Activated T-helper 1 cell treated with anti-CD3 and anti-CD28 coated beads, Interleukin-12 subunit alpha, Interleukin-12 subunit beta, Interleukin-2, Interleukin-4 antibody, amounts not matched to agents 30 ng/mL and 10 ng/mL and 1 ng/mL, durations not matched to agents 14 hours and 24 hours and 36 hours (primary cell): ENCODE measurements at regions of chr16 and their contacts with region 1.

Region 1: DNA sequence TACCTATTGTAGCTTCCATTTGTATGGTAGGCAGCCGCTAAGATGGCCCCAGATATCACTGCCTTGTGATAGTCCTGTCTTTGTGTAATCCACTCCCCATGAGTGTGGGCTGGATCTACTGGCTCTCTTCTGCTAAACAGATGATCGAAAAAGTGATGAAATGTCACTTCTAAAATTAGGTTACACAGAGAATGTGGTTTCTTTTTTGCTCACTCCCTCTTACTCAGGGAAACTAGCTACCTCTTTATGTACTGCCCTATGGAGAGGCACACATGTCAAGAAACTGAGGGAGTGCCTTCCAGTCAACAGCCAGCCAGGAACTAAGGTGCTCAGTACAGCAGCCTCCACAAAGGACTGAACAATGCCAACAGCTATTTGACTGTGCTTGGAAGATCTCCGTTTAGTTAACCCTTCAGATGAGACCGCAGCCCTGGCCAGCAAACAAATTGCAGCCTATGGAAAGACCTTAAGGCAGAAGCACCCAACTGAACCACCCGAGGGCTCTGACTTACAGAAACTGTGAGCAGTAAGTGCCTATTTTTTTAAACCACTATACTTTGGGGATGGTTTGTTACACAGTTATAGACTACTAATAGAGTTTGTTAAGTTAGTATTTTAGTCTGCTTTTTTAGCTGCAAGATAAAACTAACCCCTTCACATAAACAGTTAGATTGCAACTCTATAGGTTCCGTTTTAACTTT is 113.2 kb upstream of the MAF start:
- DNase-seq: no peak
- H3K4me3 Mint-ChIP-seq: peak overlapping the region; percentile 42
- H3K27ac Mint-ChIP-seq: peak overlapping the region; percentile 51
- H3K4me1 Mint-ChIP-seq: peaks cover 25% of the 10 kb centered on the region
- H3K27me3 Mint-ChIP-seq: peaks cover 4% of the 10 kb centered on the region

Region 2: GRCh38 chr16:79758615-79759341 is 45.0 kb after region 1 on chr16:
- intact Hi-C with region 1: loop called (anchors 5 kb)
- DNase-seq: no peak
- H3K4me3 Mint-ChIP-seq: no peak overlapping the region
- H3K27ac Mint-ChIP-seq: no peak overlapping the region
- H3K4me1 Mint-ChIP-seq: peaks cover 37% of the 10 kb centered on the region
- H3K27me3 Mint-ChIP-seq: peaks cover 2% of the 10 kb centered on the region